Panc1 (cell line): ENCODE measurements at regions of chr20 and their contacts with region 1.

Region 1: GRCh38 chr20:35277531-35278395 is at the start of gene MMP24OS:
- DNase-seq: peak; percentile 64
- ATAC-seq: peak; percentile 90
- H3K4me3 ChIP-seq: peak within 1 kb of the TSS; percentile 87 to 88
- H3K27ac ChIP-seq: peak within 1 kb of the TSS; percentile 95
- H3K4me1 ChIP-seq: peaks cover 37% of the 10 kb centered on the region
- H3K27me3 ChIP-seq: no peaks in the 10 kb centered on the region
- CTCF ChIP-seq: no peak
- total RNA-seq, gene MMP24OS: 83.8 TPM

Region 2: DNA sequence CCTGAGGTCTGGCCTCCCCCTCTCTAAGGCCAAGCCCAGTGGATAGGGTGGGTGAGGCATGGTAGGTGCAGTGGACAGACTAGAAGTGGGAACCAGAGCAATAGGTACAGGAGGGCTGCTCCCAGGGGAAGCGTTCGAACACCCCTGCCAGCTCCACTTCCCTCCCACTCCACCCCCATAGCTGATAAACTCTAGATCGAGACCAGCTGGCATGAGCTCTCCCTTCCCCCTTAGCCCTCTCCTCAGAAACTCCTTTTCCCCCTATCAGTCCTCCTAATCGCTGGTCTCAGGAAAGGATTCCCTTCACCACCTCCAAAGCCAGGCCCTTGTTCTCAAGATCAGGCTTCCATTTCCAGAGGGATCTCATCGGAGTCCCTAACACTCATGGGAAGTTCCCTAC is 20.5 kb after region 1 on chr20:
- CTCF ChIA-PET with region 1: interaction called, 3 read pairs
- POLR2A ChIA-PET with region 1: interaction called, 13 read pairs
- in situ Hi-C with region 1: no loop called
- intact Hi-C with region 1: no loop called
- DNase-seq: no peak
- ATAC-seq: no peak
- H3K4me3 ChIP-seq: no peak overlapping the region
- H3K27ac ChIP-seq: no peak overlapping the region
- H3K4me1 ChIP-seq: peaks cover 18% of the 10 kb centered on the region
- H3K27me3 ChIP-seq: no peaks in the 10 kb centered on the region
- CTCF ChIP-seq: no peak

Region 3: GRCh38 chr20:35329435-35330139 is 51.8 kb after region 1 on chr20:
- CTCF ChIA-PET with region 1: interaction called, 15 read pairs
- POLR2A ChIA-PET with region 1: no interaction called
- in situ Hi-C with region 1: no loop called
- intact Hi-C with region 1: no loop called
- DNase-seq: no peak
- ATAC-seq: peak; percentile 73; the same call in 1 of the 2 replicates
- H3K4me3 ChIP-seq: no peak overlapping the region
- H3K27ac ChIP-seq: peak overlapping the region; percentile 58
- H3K4me1 ChIP-seq: peaks cover 41% of the 10 kb centered on the region
- H3K27me3 ChIP-seq: no peaks in the 10 kb centered on the region
- CTCF ChIP-seq: peak; percentile 80